Motor neuron (in vitro differentiated cells): ENCODE measurements at regions of chr3 and their contacts with region 1.

Region 1: GRCh38 chr3:117997201-117998049 is 1037.2 kb downstream of the IGSF11 start:
- ATAC-seq: peak; percentile 82 to 97 (median 86)
- H3K4me3 ChIP-seq: peak overlapping the region; percentile 47 to 87 (median 53)
- H3K27ac ChIP-seq: peak overlapping the region; percentile 47 to 82
- H3K4me1 ChIP-seq: peaks cover 0 to 7% of the 10 kb centered on the region in 2 donors

Region 2: DNA sequence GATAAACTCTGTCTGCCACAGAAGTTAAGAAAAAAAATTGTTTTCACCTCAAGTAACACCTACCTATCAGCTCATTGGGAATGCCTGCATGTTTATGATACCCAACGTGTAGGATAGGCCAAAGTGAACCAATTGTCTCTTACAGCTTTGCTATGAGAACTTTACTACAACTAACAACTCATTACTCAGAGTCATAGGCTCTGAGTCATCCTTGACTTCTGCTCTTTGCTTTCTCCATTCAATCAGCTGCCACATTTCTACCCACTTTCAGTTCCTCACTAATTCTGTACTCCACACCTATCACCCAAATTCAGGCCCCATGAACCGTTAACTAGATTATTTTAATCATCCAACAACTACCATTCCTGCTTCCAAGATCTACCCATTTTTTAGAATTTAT is 444.0 kb before region 1 on chr3:
- in situ Hi-C with region 1: loop called in 1 of 9 experiments (anchors 25 kb)
- ATAC-seq: peak in 1 of 8 experiments; percentile 37
- H3K4me3 ChIP-seq: no peak overlapping the region
- H3K27ac ChIP-seq: no peak overlapping the region
- H3K4me1 ChIP-seq: peaks cover 11 to 15% of the 10 kb centered on the region in 2 donors

Region 3: DNA sequence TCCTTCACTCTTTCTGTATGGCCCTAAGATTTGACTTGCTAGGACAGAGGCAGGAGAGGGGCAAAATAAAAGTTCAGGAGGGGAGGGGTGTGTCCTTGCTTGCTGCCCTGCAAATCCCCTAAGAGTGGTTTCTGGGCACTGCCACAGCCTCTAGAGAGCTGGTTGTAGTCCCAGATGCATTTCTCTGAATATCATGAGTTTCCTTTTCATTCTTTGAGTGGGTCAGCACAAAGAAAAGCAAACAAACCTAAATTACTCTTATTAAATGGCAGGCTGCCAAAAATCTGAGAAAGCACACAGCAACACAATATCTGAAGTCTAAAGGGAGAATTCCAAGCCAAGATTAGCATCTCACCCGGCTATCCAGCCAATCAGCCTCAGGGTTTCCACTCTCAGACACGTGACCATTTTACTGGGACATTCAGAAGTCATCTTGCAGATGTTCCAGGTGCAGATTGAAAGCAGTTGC is 368.6 kb before region 1 on chr3:
- in situ Hi-C with region 1: no loop called
- ATAC-seq: peak in 7 of 8 experiments; percentile 35 to 91 (median 76)
- H3K4me3 ChIP-seq: no peak overlapping the region
- H3K27ac ChIP-seq: no peak overlapping the region
- H3K4me1 ChIP-seq: peaks cover 5 to 6% of the 10 kb centered on the region in 2 donors